ENCODE measurements at regions of chr10 and their contacts with region 1.

Region 1: GRCh38 chr10:103069453-103070331 is 123.4 kb downstream of the NT5C2 start:
- DNase-seq: peak; percentile 75
- H3K4me3 ChIP-seq: no peak overlapping the region
- H3K27ac ChIP-seq: no peak overlapping the region
- H3K4me1 ChIP-seq: no peaks in the 10 kb centered on the region
- H3K27me3 ChIP-seq: no peaks in the 10 kb centered on the region
- CTCF ChIP-seq: peak; percentile 61 to 75 (median 63)
- EP300 ChIP-seq: no peak
- POLR2A ChIP-seq: no peak

Region 2: GRCh38 chr10:102743588-102744373 is 325.9 kb before region 1 on chr10 and contains the start of gene WBP1L:
- in situ Hi-C with region 1: loop called in 2 of 4 experiments (anchors 25 kb)
- intact Hi-C with region 1: no loop called
- DNase-seq: peak; percentile 98
- H3K4me3 ChIP-seq: peak within 1 kb of the TSS; percentile 78 to 100 (median 85)
- H3K27ac ChIP-seq: peak within 1 kb of the TSS; percentile 90 to 95 (median 92)
- H3K4me1 ChIP-seq: peaks cover 0 to 26% (median 20%) of the 10 kb centered on the region in 4 donors
- H3K27me3 ChIP-seq: no peaks in the 10 kb centered on the region
- CTCF ChIP-seq: peak in 2 of 5 experiments; percentile 16 to 30
- EP300 ChIP-seq: no peak
- POLR2A ChIP-seq: peak; percentile 96
- total RNA-seq, gene WBP1L: 68.9 to 168 (median 129) TPM

Region 3: GRCh38 chr10:102835007-102835482 is 234.6 kb before region 1 on chr10:
- in situ Hi-C with region 1: loop called in 3 of 4 experiments (anchors 10 kb)
- intact Hi-C with region 1: no loop called
- DNase-seq: peak; percentile 78
- H3K4me3 ChIP-seq: no peak overlapping the region
- H3K27ac ChIP-seq: no peak overlapping the region
- H3K4me1 ChIP-seq: peaks cover 0 to 10% (median 9%) of the 10 kb centered on the region in 4 donors
- H3K27me3 ChIP-seq: peaks cover 5% of the 10 kb centered on the region
- CTCF ChIP-seq: peak; percentile 80 to 88 (median 83)
- EP300 ChIP-seq: no peak
- POLR2A ChIP-seq: no peak

Region 4: GRCh38 chr10:102841827-102842345 is 227.8 kb before region 1 on chr10:
- in situ Hi-C with region 1: loop called in 3 of 4 experiments (anchors 10 kb)
- intact Hi-C with region 1: no loop called
- DNase-seq: no peak
- H3K4me3 ChIP-seq: no peak overlapping the region
- H3K27ac ChIP-seq: no peak overlapping the region
- H3K4me1 ChIP-seq: no peaks in the 10 kb centered on the region
- H3K27me3 ChIP-seq: no peaks in the 10 kb centered on the region
- CTCF ChIP-seq: no peak
- EP300 ChIP-seq: no peak
- POLR2A ChIP-seq: no peak

Region 5: GRCh38 chr10:102917962-102918816 is 151.5 kb before region 1 on chr10 and contains the start of gene CNNM2:
- in situ Hi-C with region 1: loop called in 2 of 4 experiments (anchors 5 to 10 kb)
- intact Hi-C with region 1: no loop called
- DNase-seq: peak; percentile 100
- H3K4me3 ChIP-seq: peak within 1 kb of the TSS; percentile 71 to 94 (median 88)
- H3K27ac ChIP-seq: peak within 1 kb of the TSS; percentile 86 to 92 (median 92)
- H3K4me1 ChIP-seq: peaks cover 5 to 49% (median 34%) of the 10 kb centered on the region in 4 donors
- H3K27me3 ChIP-seq: no peaks in the 10 kb centered on the region
- CTCF ChIP-seq: peak in 1 of 5 experiments; percentile 10
- EP300 ChIP-seq: no peak
- POLR2A ChIP-seq: peak; percentile 63
- total RNA-seq, gene CNNM2: 48.0 to 144 (median 100) TPM

Region 6: GRCh38 chr10:102935505-102935904 is 134.2 kb before region 1 on chr10:
- in situ Hi-C with region 1: loop called in 1 of 4 experiments (anchors 10 kb)
- intact Hi-C with region 1: no loop called
- DNase-seq: no peak
- H3K4me3 ChIP-seq: no peak overlapping the region
- H3K27ac ChIP-seq: no peak overlapping the region
- H3K4me1 ChIP-seq: no peaks in the 10 kb centered on the region
- H3K27me3 ChIP-seq: no peaks in the 10 kb centered on the region
- CTCF ChIP-seq: no peak
- EP300 ChIP-seq: no peak
- POLR2A ChIP-seq: no peak

Region 7: GRCh38 chr10:104824380-104825006 is 1754.8 kb after region 1 on chr10:
- in situ Hi-C with region 1: no loop called
- intact Hi-C with region 1: no loop called
- DNase-seq: no peak
- H3K4me3 ChIP-seq: no peak overlapping the region
- H3K27ac ChIP-seq: no peak overlapping the region
- H3K4me1 ChIP-seq: no peaks in the 10 kb centered on the region
- H3K27me3 ChIP-seq: no peaks in the 10 kb centered on the region
- CTCF ChIP-seq: no peak
- EP300 ChIP-seq: no peak
- POLR2A ChIP-seq: no peak